Activated CD4-positive, alpha-beta memory T cell treated with anti-CD3 and anti-CD28 coated beads for 36 hours (primary cell): ENCODE measurements at regions of chr3 and their contacts with region 1.

Region 1: DNA sequence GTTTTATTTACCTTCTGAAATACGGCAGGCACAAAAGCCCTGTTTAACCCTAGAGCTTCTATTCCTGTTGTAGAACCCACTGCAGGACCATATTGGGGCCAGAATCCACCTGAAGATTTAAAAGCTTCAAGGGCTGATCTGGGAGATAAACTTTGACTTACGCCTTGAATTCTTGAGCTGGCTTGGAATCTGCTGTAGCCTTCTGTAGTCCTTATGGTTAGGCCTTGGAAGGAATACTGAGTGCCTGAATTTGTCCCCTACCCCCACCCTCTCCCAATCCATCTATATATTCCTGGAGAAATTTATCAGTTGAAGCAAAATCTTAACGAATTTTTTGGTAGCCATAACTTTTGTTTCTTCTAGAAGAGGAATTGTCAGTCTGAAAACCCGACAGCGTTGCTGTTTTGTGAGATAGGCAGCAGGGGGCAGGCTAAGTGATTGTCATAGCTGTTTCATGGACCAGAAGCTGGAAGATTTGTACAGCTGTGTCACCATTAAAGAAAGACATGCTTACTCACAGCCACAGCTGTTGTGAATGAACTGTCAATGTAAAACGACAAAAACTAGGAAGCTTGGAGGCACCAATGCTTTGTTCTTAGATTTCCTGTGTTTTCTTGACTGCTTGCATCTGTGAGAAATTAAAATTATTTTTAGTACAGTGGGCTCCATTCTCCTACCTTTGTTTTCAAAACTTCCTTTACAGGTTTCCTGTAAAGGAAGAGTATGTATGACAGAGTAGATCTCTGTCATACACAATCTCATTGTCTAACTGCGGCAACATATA is 12.8 kb downstream of the LXN start:
- DNase-seq: peak; percentile 72
- H3K4me3 Mint-ChIP-seq: no peak overlapping the region
- H3K27ac Mint-ChIP-seq: no peak overlapping the region
- H3K4me1 Mint-ChIP-seq: peaks cover 5% of the 10 kb centered on the region
- H3K27me3 Mint-ChIP-seq: no peaks in the 10 kb centered on the region

Region 2: DNA sequence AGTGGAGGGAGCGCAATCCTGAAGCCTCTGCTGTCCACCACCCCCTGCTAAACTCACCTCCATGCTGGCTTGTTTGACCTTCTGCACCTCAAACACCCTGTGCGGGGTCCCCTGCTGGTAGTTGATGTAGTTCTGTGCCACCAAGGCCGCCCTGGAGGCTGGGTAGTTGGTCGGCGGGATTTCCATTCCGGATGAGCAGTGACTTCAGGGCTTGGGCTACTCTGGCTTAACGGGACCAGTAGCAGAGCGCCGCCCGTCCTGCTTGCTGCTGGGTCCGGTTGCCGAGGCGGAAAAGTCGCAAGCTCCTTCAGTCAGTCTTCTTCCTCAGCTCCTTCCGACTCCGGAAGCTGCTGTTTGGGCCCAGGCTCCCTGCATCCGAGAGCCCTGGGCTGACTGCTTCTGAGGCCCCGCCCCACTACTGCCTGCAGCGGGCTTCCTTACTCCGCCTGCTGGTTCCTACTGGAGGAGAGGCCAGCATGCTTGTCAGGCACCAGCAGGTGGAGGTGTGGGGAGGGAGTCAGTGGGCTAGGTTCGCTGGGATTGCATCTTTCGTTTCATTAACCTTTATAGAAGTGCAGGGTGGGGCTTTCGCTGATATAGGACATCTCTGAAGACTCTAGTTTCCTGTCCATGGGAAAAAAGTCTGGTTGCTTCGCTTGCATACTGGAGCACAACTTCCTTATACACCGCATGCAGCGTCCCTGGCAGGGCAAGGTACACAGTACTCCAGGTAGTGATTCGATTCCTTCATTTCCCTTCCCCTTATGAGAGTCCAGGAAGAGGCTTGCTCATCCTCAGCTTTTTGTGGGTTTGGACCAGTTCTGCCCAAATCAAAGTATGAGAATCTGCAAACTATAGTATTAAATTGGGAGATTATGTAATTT is 12.9 kb after region 1 on chr3 and contains the start of gene LXN:
- CTCF ChIA-PET with region 1: interaction called, 39 read pairs
- POLR2A ChIA-PET with region 1: interaction called, 5 read pairs
- intact Hi-C with region 1: loop called (anchors 1 kb)
- DNase-seq: peak; percentile 90
- H3K4me3 Mint-ChIP-seq: peak within 1 kb of the TSS; percentile 90
- H3K27ac Mint-ChIP-seq: peak within 1 kb of the TSS; percentile 92
- H3K4me1 Mint-ChIP-seq: peaks cover 12% of the 10 kb centered on the region
- H3K27me3 Mint-ChIP-seq: no peaks in the 10 kb centered on the region
- total RNA-seq, gene LXN: 8.1 to 8.6 TPM

Region 3: GRCh38 chr3:158801696-158802408 is 142.2 kb after region 1 on chr3 and contains the start of gene MFSD1:
- CTCF ChIA-PET with region 1: interaction called, 14 read pairs
- POLR2A ChIA-PET with region 1: no interaction called
- intact Hi-C with region 1: no loop called
- DNase-seq: peak; percentile 95
- H3K4me3 Mint-ChIP-seq: peak within 1 kb of the TSS; percentile 86
- H3K27ac Mint-ChIP-seq: peak within 1 kb of the TSS; percentile 87
- H3K4me1 Mint-ChIP-seq: peaks cover 23% of the 10 kb centered on the region
- H3K27me3 Mint-ChIP-seq: no peaks in the 10 kb centered on the region
- total RNA-seq, gene MFSD1: 11.9 to 12.4 TPM

Region 4: DNA sequence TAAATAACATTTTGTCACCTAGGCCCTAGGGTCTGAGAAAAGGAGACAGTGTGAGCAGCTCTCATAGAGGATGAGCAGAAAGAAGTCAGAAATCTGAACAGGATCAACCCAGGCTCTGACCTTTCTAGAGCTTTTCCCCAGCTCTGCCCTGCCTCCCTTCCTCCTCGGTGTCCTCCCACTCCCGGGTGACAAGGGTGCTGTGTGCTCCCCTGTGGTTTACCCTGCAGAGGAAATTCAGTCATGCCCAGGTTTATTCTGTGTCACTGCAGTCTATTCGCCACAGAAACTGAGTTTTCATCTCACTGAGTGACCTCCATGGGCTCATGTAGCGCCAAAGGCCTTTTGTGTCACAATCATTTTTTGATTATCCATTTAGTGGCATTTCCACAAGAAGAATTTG is 1405.6 kb after region 1 on chr3:
- CTCF ChIA-PET with region 1: no interaction called
- POLR2A ChIA-PET with region 1: no interaction called
- intact Hi-C with region 1: no loop called
- DNase-seq: no peak
- H3K4me3 Mint-ChIP-seq: no peak overlapping the region
- H3K27ac Mint-ChIP-seq: no peak overlapping the region
- H3K4me1 Mint-ChIP-seq: peaks cover 4% of the 10 kb centered on the region
- H3K27me3 Mint-ChIP-seq: no peaks in the 10 kb centered on the region